Activated CD4-positive, alpha-beta T cell treated with anti-CD3 and anti-CD28 coated beads for 36 hours (primary cell): ENCODE measurements at regions of chr13 and their contacts with region 1.

Region 1: GRCh38 chr13:73835138-73835721 is 299.0 kb downstream of the KLF12 start:
- DNase-seq: no peak
- ATAC-seq: peak; percentile 57
- H3K4me3 Mint-ChIP-seq: no peak overlapping the region
- H3K27ac Mint-ChIP-seq: no peak overlapping the region
- H3K4me1 Mint-ChIP-seq: peaks cover 46% of the 10 kb centered on the region
- H3K27me3 Mint-ChIP-seq: no peaks in the 10 kb centered on the region

Region 2: GRCh38 chr13:73633817-73634460 is 201.3 kb before region 1 on chr13:
- CTCF ChIA-PET with region 1: no interaction called
- POLR2A ChIA-PET with region 1: no interaction called
- intact Hi-C with region 1: no loop called
- DNase-seq: no peak
- ATAC-seq: no peak
- H3K4me3 Mint-ChIP-seq: no peak overlapping the region
- H3K27ac Mint-ChIP-seq: no peak overlapping the region
- H3K4me1 Mint-ChIP-seq: peaks cover 19% of the 10 kb centered on the region
- H3K27me3 Mint-ChIP-seq: peaks cover 2% of the 10 kb centered on the region

Region 3: GRCh38 chr13:73702419-73703071 is 132.7 kb before region 1 on chr13:
- CTCF ChIA-PET with region 1: no interaction called
- POLR2A ChIA-PET with region 1: no interaction called
- intact Hi-C with region 1: no loop called
- DNase-seq: peak; percentile 58
- ATAC-seq: peak; percentile 98
- H3K4me3 Mint-ChIP-seq: peak overlapping the region; percentile 57
- H3K27ac Mint-ChIP-seq: peak overlapping the region; percentile 74
- H3K4me1 Mint-ChIP-seq: peaks cover 39% of the 10 kb centered on the region
- H3K27me3 Mint-ChIP-seq: no peaks in the 10 kb centered on the region

Region 4: GRCh38 chr13:73849292-73849691 is 14.1 kb after region 1 on chr13:
- CTCF ChIA-PET with region 1: interaction called, 11 read pairs
- POLR2A ChIA-PET with region 1: no interaction called
- intact Hi-C with region 1: no loop called
- DNase-seq: peak; percentile 32
- ATAC-seq: peak; percentile 36
- H3K4me3 Mint-ChIP-seq: no peak overlapping the region
- H3K27ac Mint-ChIP-seq: no peak overlapping the region
- H3K4me1 Mint-ChIP-seq: peaks cover 41% of the 10 kb centered on the region
- H3K27me3 Mint-ChIP-seq: no peaks in the 10 kb centered on the region

Region 5: GRCh38 chr13:73943137-73943964 is 108.1 kb after region 1 on chr13:
- CTCF ChIA-PET with region 1: no interaction called
- POLR2A ChIA-PET with region 1: no interaction called
- intact Hi-C with region 1: loop called in 1 of 2 experiments (anchors 5 kb)
- DNase-seq: no peak
- ATAC-seq: peak; percentile 88
- H3K4me3 Mint-ChIP-seq: peak overlapping the region; percentile 50
- H3K27ac Mint-ChIP-seq: peak overlapping the region; percentile 92
- H3K4me1 Mint-ChIP-seq: peaks cover 83% of the 10 kb centered on the region
- H3K27me3 Mint-ChIP-seq: no peaks in the 10 kb centered on the region